ENCODE measurements at regions of chr3 and their contacts with region 1.

Region 1: GRCh38 chr3:186930641-186931531 is 560 bp downstream of the ST6GAL1 start:
- DNase-seq: peak; percentile 24 to 81
- H3K4me3 ChIP-seq: peak overlapping the region; percentile 66 to 94
- H3K27ac ChIP-seq: peak overlapping the region; percentile 82 to 91
- H3K4me1 ChIP-seq: peaks cover 0 to 19% of the 10 kb centered on the region in 2 donors
- H3K27me3 ChIP-seq: no peaks in the 10 kb centered on the region
- CTCF ChIP-seq: peak in 1 of 3 experiments; percentile 26

Region 2: DNA sequence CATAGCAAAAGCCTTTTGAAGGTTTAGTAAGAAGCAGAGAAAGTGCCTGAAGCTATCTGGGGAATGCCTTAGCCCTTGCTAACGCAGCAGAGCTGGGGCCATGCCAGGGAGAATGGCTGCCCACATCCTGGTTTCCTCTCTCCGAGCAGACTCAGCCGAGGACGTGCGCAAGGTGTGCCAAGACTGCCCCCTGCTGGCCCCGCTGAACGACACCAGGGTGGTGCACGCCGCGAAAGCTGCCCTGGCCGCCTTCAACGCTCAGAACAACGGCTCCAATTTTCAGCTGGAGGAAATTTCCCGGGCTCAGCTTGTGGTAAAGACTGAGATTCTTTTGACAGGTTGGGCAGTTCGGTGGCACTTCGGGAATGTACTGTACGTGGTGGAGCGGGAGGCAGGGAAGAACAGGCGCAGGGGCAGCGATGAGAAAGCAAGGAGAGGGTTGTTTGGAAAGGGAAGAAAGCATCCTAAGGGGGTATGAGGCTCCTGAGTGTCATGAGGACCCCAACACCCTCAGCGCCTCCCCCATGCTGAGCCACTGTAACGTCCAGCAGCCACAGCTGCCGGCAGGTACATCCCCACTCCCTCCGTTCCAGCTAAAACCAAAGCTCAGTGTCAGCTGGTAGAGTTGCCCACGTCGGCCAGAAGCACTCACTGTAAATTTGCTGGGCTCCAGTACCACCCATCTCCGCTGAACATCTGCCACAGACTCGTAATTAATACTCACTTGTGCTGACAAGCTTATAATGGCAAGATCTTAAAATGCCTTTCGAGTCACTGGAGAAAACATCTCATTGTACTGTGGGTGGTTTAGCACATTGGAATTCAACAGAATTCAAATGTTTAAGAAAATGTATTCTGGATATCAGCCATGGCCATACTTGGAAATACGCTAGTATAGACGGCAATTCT is 313.6 kb before region 1 on chr3:
- intact Hi-C with region 1: loop called (anchors 10 kb)
- DNase-seq: peak; percentile 66 to 93
- H3K4me3 ChIP-seq: peak overlapping the region in 1 of 2 donors; percentile 45
- H3K27ac ChIP-seq: no peak overlapping the region
- H3K4me1 ChIP-seq: peaks cover 2 to 4% of the 10 kb centered on the region in 2 donors
- H3K27me3 ChIP-seq: no peaks in the 10 kb centered on the region
- CTCF ChIP-seq: peak; percentile 86 to 93 (median 88)

Region 3: DNA sequence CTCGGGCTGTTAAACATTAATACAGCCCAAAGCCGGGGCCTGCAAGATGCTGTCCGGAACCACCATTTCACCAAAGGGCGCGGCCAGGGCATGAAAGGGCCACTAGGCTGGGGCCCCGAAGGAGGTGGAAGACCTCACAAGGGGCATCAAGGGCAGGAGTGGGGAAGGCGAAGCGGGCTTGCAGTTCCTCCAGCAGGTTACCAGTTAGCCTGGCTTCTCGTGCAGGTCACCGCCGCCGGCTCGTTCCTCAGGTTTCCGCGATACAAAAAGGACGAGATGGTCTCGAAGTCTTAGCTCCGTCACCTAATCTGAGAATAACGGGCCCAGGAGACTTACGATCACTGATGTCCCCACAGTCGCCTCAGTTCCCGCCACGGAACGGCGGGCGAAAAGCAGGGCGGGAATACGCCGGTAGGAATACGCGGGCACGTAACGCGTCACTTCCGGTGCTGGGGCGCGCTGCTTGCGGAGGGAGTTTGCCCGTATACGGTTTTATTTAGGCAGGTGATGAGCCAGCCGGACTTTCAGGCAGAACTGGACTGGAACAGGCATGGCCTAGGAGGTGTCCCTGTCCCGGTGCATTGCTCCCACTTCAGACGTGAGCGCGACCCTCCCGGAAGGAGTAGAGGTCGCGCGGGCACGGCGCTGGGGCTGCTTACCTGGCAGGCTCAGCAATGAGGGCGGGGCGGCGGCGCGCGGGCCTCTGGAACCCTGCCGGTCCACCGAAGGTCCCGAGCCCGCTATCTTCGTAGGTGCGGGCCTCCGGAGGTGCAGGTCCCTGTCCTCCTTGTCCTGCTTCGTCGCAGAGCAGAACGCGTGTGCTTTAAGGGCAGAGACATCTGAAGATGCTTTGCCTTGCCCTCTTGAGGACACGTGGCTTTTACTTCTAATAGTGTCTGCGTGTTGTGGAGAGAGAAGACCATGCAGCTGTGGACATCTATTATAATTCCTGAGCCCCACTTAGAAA is 124.5 kb before region 1 on chr3 and contains the start of gene RFC4:
- intact Hi-C with region 1: loop called (anchors 5 kb)
- DNase-seq: peak in 1 of 2 donors; percentile 92
- H3K4me3 ChIP-seq: peak within 1 kb of the TSS; percentile 76 to 83
- H3K27ac ChIP-seq: peak within 1 kb of the TSS; percentile 75 to 78
- H3K4me1 ChIP-seq: peaks cover 6 to 13% of the 10 kb centered on the region in 2 donors
- H3K27me3 ChIP-seq: no peaks in the 10 kb centered on the region
- CTCF ChIP-seq: no peak
- total RNA-seq, gene RFC4: 23.8 TPM

Region 4: GRCh38 chr3:186854954-186855353 is 75.9 kb before region 1 on chr3:
- intact Hi-C with region 1: no loop called
- DNase-seq: no peak
- H3K4me3 ChIP-seq: no peak overlapping the region
- H3K27ac ChIP-seq: no peak overlapping the region
- H3K4me1 ChIP-seq: no peaks in the 10 kb centered on the region
- H3K27me3 ChIP-seq: no peaks in the 10 kb centered on the region
- CTCF ChIP-seq: no peak

Region 5: DNA sequence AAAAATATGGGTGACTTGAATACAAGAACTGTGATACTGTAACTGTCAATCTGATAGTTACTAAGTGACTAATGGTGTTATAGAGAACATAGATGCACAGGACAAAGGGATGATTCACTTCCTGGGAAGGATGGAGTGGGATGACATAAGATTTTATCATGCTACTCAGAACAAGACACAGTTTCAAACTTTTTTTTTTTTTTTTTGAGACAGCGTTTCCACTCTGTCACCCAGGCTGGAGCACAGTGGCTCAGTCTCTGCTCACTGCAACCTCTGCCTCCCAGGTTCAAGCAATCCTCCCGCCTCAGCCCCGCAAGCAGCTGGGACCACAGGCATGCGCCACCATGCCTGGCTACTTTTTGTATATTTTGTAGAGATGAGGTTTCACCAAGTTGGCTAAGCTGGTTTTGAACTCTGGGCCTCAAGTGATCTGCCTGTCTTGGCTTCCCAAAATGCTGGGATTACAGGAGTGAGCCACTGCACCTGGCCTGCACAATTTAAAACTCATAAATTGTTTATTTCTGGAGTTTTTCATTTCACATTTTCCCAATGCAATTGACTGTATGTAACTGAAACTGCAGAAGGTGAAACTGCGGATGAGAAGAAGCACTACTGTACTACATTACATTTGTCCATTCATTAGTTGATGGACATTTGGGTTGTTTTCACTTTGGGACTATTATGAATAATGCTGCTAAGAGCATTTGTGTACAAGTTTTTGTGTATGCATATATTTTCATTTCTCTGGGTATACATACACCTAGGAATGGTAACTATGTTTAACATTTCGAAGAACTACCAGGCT is 47.8 kb before region 1 on chr3:
- intact Hi-C with region 1: no loop called
- DNase-seq: no peak
- H3K4me3 ChIP-seq: no peak overlapping the region
- H3K27ac ChIP-seq: no peak overlapping the region
- H3K4me1 ChIP-seq: no peaks in the 10 kb centered on the region
- H3K27me3 ChIP-seq: no peaks in the 10 kb centered on the region
- CTCF ChIP-seq: no peak

Region 6: DNA sequence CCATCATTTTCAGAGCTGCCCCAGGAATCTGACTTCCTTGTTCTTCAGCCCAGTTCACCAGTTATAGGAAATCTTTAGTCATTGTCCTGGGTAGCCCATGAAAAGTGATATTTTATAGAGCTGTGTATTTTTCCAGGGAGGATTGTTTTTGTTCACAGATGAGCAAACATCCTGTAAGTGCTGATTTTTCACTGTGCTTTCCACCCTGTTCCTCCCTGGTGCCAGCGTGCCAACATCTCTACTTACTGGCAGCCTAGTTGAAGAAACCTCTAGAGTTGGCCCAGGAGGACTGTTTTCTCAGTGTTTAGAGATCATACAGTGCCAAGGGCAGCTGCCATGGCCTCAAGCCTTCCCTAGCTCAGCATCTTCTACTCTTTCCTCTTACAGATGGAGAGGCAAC is 40.7 kb after region 1 on chr3:
- intact Hi-C with region 1: loop called (anchors 2 kb)
- DNase-seq: peak; percentile 50 to 92
- H3K4me3 ChIP-seq: no peak overlapping the region
- H3K27ac ChIP-seq: peak overlapping the region; percentile 87 to 88
- H3K4me1 ChIP-seq: peaks cover 36 to 85% of the 10 kb centered on the region in 2 donors
- H3K27me3 ChIP-seq: no peaks in the 10 kb centered on the region
- CTCF ChIP-seq: no peak

Region 7: GRCh38 chr3:187082758-187083375 is 152.0 kb after region 1 on chr3:
- intact Hi-C with region 1: no loop called
- DNase-seq: no peak
- H3K4me3 ChIP-seq: no peak overlapping the region
- H3K27ac ChIP-seq: no peak overlapping the region
- H3K4me1 ChIP-seq: peaks cover 0 to 17% of the 10 kb centered on the region in 2 donors
- H3K27me3 ChIP-seq: no peaks in the 10 kb centered on the region
- CTCF ChIP-seq: no peak

Region 8: DNA sequence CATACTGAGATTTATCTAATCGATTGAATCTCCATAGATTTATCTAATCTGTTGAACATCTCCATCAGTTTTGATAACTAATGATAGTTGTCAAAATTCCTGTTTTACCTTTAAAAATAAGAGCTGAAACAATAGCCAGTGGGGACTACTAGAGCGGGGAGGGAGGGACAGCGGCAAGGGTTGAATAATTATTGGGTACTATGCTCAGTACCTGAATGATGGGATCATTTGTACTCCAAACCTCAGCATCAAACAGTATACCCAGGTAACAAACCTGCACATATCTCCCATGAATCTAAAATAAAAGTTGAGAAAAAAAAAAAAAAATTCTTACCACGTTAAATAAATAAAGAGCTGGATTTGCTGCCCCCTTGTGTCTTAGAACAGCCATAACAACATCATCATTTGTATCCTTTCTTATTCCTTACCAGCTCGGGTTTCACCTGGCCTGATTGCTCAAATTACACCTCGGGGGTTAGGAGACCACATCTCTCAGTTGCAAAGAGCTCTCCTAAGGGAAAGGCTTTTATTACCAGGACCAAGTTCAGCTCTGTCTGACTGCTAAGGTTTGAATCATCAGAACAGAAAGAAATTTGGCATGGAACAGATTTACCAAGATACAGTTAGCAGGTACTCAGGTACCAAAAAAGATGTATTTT is 234.1 kb after region 1 on chr3:
- intact Hi-C with region 1: loop called (anchors 2 kb)
- DNase-seq: no peak
- H3K4me3 ChIP-seq: no peak overlapping the region
- H3K27ac ChIP-seq: no peak overlapping the region
- H3K4me1 ChIP-seq: peaks cover 2 to 5% of the 10 kb centered on the region in 2 donors
- H3K27me3 ChIP-seq: no peaks in the 10 kb centered on the region
- CTCF ChIP-seq: peak; percentile 58 to 70 (median 68)

Measured in ascending aorta (tissue), 2 donors.